ENCODE measurements at regions of chr2 and their contacts with region 1.

Region 1: DNA sequence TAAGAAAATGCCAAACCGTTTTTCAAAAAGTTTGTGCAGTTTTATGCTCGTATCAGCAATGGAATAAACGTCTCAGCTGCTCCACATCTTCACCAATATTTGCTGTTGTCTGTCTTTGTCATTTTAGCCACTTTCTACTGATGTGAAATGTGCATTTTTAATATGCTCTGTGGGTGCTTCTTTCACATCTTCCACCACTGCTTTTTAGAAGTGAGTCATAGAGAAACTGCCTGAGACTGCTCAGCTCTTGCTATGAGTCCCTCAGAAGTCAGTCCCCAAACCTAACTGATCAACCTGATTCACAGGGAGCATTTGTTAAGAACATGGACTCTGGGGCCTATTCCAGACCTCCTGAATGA is 41.0 kb upstream of the EPC2 start:
- DNase-seq: peak; percentile 56
- H3K4me3 Mint-ChIP-seq: no peak overlapping the region
- H3K27ac Mint-ChIP-seq: peak overlapping the region; percentile 82
- H3K4me1 Mint-ChIP-seq: peaks cover 16% of the 10 kb centered on the region
- H3K27me3 Mint-ChIP-seq: no peaks in the 10 kb centered on the region

Region 2: GRCh38 chr2:148020111-148021058 is 583.2 kb before region 1 on chr2 and contains the start of gene ORC4:
- CTCF ChIA-PET with region 1: no interaction called
- intact Hi-C with region 1: loop called (anchors 1 kb)
- DNase-seq: peak; percentile 99
- H3K4me3 Mint-ChIP-seq: peak within 1 kb of the TSS; percentile 100
- H3K27ac Mint-ChIP-seq: peak within 1 kb of the TSS; percentile 96
- H3K4me1 Mint-ChIP-seq: peaks cover 44% of the 10 kb centered on the region
- H3K27me3 Mint-ChIP-seq: no peaks in the 10 kb centered on the region
- total RNA-seq, gene ORC4: 35.9 to 38.8 TPM

Region 3: DNA sequence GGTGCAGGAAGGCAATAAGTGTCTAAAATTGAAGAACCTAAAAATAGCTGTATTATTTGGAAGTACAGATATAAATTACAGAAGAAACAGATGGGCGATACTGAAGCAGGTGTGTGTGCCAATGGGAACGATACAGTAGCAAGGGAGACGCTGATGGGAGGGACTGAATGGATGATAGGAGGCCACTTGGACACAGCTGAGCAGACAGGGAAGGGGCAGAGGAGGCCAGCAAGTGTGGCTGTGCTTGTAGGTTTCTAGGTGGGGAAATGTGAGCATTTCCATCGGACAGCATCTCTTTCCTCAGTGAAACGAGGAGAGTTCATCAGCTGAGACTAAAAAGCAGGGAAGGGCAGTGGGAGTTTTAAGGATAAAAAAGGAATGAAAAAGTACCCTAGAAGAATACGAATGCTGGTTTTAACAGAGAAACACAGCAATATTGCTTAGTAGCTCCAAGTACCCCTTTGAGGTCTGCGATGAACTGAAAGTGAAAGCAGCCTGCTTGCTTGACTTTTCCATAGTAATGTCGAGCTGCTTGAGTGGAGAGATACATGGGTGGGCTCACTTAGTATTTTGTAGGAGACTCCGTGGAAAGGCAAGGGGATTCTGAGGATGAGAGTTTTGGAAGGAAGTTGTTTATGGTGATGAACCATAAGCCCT is 50.7 kb before region 1 on chr2:
- CTCF ChIA-PET with region 1: no interaction called
- intact Hi-C with region 1: loop called (anchors 2 kb)
- DNase-seq: peak; percentile 57
- H3K4me3 Mint-ChIP-seq: no peak overlapping the region
- H3K27ac Mint-ChIP-seq: no peak overlapping the region
- H3K4me1 Mint-ChIP-seq: no peaks in the 10 kb centered on the region
- H3K27me3 Mint-ChIP-seq: no peaks in the 10 kb centered on the region

Region 4: DNA sequence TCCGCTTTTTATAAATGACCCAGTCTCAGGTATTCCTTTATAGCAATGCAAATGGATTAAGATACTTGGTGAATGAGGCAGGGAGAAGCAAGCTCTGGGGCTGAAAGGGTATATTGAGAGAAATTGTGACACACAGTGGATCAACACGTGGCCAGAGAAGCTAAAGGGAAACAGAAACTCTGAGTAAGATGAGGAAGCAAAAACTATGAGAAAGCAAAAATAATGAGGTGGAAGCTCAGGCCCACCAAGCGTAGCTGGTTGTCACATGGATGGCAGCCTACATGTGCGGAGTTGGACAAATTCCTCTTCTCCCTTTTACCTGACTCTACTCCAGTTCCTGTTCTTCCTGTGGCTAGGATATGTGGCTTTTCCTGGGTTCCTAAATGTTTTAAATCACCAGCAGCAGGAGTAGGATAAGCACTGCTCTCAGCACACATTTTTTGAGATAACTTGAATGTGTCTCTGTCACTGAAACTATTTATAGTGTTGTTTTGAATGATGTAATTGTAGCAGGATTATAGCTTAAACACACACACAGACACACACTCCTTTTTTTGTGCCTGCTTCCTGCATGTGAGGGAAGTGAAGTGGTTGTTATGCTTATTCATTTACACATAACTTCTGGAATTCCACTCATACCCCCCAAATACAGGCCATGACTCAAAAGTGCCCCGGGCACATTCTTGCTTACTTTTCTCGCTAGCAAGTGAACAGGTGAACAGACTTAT is 10.9 kb after region 1 on chr2:
- CTCF ChIA-PET with region 1: interaction called, 5 read pairs
- intact Hi-C with region 1: loop called (anchors 1 kb)
- DNase-seq: peak; percentile 43
- H3K4me3 Mint-ChIP-seq: no peak overlapping the region
- H3K27ac Mint-ChIP-seq: no peak overlapping the region
- H3K4me1 Mint-ChIP-seq: peaks cover 11% of the 10 kb centered on the region
- H3K27me3 Mint-ChIP-seq: no peaks in the 10 kb centered on the region

Region 5: GRCh38 chr2:148702475-148702874 is 98.9 kb after region 1 on chr2:
- CTCF ChIA-PET with region 1: no interaction called
- intact Hi-C with region 1: loop called (anchors 1 kb)
- DNase-seq: no peak
- H3K4me3 Mint-ChIP-seq: no peak overlapping the region
- H3K27ac Mint-ChIP-seq: no peak overlapping the region
- H3K4me1 Mint-ChIP-seq: peaks cover 36% of the 10 kb centered on the region
- H3K27me3 Mint-ChIP-seq: no peaks in the 10 kb centered on the region

Region 6: DNA sequence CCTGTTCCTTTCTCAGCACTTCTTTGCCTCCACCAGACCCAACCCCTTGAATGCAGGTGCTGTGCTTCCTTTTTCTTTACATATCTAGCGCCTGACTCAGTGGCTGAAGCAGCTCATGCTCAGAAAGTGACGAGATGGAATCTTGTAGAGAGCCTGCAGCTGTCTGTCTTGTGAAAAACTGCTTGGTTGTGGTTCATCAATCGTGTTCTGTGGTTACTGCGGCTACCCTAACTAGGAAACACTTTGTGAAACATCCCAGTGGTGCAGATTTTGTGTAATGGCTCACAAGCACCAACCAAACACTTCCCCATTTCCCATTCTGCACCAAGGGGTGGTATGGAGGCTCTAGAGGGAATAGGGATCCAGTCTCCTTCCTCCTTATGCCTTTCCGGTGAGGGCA is 1291.2 kb after region 1 on chr2:
- CTCF ChIA-PET with region 1: no interaction called
- intact Hi-C with region 1: no loop called
- DNase-seq: no peak
- H3K4me3 Mint-ChIP-seq: no peak overlapping the region
- H3K27ac Mint-ChIP-seq: no peak overlapping the region
- H3K4me1 Mint-ChIP-seq: no peaks in the 10 kb centered on the region
- H3K27me3 Mint-ChIP-seq: no peaks in the 10 kb centered on the region